ENCODE measurements at regions of chr4 and their contacts with region 1.

Region 1: DNA sequence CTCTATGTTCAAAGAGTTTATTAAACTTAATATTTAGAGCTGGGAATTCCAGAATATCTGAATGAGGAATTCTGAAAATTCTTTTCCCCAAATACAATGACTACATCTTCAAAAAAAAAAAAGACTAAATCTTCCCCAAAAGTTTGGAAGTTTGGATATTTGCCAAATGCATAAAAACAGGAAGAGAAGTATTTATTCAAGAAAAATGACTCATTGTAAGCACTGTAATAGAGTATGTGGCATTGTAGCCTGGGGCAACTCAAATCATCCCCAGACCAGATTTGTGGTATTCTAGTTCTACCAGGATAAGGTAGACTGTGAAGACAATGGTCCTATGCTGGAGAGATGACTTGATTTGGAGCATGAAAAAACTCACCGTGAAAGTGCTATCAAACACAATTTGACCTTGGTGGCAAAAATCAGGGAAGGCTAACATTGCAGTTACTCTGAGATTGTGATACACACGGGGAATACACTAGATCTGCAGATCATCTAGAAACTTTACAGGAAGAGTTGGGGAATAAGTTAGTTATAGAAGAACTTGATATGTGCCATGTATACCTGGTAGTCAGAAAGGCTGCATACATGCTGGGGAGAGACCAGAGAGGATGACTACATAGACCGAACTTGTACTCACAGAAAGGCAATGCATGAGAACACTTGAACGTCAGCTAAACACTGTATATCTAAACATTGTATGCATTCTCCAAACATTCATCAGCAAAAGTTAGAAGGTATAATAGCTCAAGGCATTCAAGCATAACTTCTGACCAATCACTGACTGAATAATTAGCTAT is 78.3 kb upstream of the PDHA2 start:
- DNase-seq: peak; percentile 81
- H3K4me3 ChIP-seq: no peak overlapping the region
- H3K27ac ChIP-seq: peak overlapping the region; percentile 30
- H3K4me1 ChIP-seq: peaks cover 30% of the 10 kb centered on the region
- H3K27me3 ChIP-seq: peaks cover 0 to 2% of the 10 kb centered on the region in 2 experiments
- CTCF ChIP-seq: no peak
- POLR2A ChIP-seq: no peak

Region 2: GRCh38 chr4:94957030-94957429 is 804.6 kb before region 1 on chr4:
- CTCF ChIA-PET with region 1: no interaction called
- POLR2A ChIA-PET with region 1: no interaction called
- dilution Hi-C with region 1: no loop called
- intact Hi-C with region 1: no loop called
- DNase-seq: no peak
- H3K4me3 ChIP-seq: no peak overlapping the region
- H3K27ac ChIP-seq: no peak overlapping the region
- H3K4me1 ChIP-seq: no peaks in the 10 kb centered on the region
- H3K27me3 ChIP-seq: no peaks in the 10 kb centered on the region
- CTCF ChIP-seq: no peak
- POLR2A ChIP-seq: no peak

Region 3: DNA sequence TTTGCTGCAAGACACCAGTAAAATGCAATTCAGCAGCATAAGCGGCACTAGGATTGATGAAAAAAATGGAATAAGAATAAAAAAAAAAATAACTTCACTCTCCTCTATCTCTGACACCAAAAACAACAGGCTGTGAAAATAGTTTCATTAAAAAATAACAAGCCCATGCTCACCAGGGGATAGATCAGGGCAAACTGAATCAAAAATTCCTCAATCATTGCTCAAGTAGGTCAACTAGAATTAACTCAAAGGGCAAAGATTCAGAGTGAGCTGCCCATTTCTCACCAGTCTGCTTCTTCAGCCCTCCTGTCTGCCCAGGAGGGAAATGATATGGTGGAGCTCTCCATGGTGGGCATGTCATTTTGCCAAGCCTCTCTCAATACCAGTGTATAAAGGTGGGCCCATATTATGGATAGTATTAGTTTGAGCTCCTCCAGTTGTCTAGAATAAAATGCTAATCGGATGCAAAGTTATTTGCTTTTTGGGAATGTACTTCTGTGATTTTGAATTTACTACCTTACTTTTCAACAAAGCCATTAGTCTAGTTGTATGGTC is 366.8 kb before region 1 on chr4:
- CTCF ChIA-PET with region 1: no interaction called
- POLR2A ChIA-PET with region 1: no interaction called
- dilution Hi-C with region 1: no loop called
- intact Hi-C with region 1: no loop called
- DNase-seq: no peak
- H3K4me3 ChIP-seq: no peak overlapping the region
- H3K27ac ChIP-seq: no peak overlapping the region
- H3K4me1 ChIP-seq: no peaks in the 10 kb centered on the region
- H3K27me3 ChIP-seq: no peaks in the 10 kb centered on the region
- CTCF ChIP-seq: no peak
- POLR2A ChIP-seq: no peak

Region 4: DNA sequence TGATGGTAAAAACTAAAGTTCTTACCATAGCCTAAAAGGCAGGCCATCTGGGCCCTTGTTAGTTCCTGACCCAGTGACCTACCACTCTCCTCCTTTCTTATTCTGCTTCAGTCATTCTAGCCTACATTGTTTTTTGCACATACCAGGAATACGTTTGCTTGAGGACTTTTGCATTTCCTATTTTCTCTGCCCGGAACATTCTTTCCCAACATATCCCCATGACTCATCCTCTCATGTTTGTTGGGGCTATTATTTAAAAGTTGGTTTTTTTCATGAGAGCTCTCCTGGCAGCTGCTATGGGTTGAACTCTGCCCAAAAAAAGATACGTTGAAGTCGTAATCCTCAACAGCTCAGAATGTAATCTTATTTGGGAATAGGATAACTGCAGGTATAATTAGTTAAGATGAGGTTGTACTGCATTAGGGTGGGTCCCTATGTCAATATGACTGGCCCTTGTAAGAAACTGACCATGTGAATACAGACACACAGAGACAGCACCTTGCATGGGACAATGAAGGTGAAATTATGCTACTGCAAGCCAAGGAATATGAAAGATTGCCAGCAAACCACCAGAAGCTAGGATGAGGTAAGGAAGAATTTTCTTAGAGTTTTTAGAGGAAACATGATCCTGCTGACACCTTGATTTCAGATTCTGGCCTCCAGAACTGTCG is 60.0 kb before region 1 on chr4:
- CTCF ChIA-PET with region 1: no interaction called
- POLR2A ChIA-PET with region 1: no interaction called
- dilution Hi-C with region 1: no loop called
- intact Hi-C with region 1: loop called (anchors 2 kb)
- DNase-seq: peak; percentile 84
- H3K4me3 ChIP-seq: no peak overlapping the region
- H3K27ac ChIP-seq: peak overlapping the region; percentile 70
- H3K4me1 ChIP-seq: peaks cover 14% of the 10 kb centered on the region
- H3K27me3 ChIP-seq: no peaks in the 10 kb centered on the region
- CTCF ChIP-seq: no peak
- POLR2A ChIP-seq: no peak

Region 5: DNA sequence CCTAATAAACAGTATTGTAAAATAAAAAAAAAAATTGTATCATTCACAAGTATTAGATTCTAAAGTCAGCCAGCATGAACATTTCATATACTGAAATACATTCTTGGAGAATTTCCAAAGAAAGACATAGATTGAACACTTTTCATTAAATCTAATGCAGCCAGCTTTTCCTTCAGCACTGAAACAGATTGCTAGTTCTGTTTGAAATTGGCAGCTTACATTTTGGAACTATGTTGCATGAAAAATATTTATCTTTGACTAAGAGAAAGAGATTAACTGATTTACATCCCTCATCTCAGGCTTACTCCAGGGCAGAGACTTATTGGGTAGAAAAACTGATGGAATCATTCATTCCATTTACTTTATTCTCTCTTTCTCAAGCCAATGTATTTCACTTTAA is 351.0 kb after region 1 on chr4:
- CTCF ChIA-PET with region 1: no interaction called
- POLR2A ChIA-PET with region 1: no interaction called
- dilution Hi-C with region 1: no loop called
- intact Hi-C with region 1: no loop called
- DNase-seq: no peak
- H3K4me3 ChIP-seq: no peak overlapping the region
- H3K27ac ChIP-seq: no peak overlapping the region
- H3K4me1 ChIP-seq: no peaks in the 10 kb centered on the region
- H3K27me3 ChIP-seq: no peaks in the 10 kb centered on the region
- CTCF ChIP-seq: no peak
- POLR2A ChIP-seq: no peak